ENCODE measurements at regions of chr18 and their contacts with region 1.

Region 1: DNA sequence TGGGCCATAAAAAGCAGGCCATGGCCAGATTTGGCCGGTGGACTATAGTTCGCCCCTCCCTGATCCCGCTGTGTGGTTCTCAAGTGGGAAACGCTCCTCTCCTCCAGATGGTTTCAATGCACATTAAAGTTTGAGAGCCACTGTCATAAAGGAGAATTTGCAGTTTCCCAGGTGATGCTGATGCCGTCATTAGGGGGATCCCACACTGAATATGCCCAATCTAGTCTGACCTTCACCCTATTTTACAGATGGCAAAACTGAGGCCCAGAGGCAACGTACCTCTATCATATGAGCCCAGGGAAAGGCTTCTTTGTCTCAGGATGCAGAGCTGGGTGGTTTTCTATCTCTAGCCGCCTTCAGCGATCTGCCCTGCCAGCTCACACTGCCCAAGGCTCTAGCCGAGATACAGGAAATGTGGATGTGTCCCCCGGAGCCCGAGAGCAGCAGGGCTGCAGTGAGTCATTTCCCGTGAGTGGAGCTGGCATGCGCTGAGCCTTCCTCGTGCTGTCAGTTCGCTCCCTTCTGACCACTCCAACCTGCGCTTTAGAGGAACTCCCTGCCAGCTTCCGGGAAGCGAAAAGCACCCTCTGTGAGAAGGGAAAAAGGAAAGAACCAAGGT is 116.2 kb downstream of the SMAD7 start:
- DNase-seq: peak; percentile 37 to 84 (median 56)
- ATAC-seq: peak; percentile 78 to 83 (median 82)
- H3K4me3 ChIP-seq: peak overlapping the region; percentile 40 to 55
- H3K4me3 Mint-ChIP-seq: peak overlapping the region; percentile 72 to 83 (median 79)
- H3K27ac ChIP-seq: peak overlapping the region; percentile 93
- H3K27ac Mint-ChIP-seq: peak overlapping the region; percentile 88 to 97
- H3K4me1 ChIP-seq: peaks cover 39 to 99% of the 10 kb centered on the region in 2 experiments
- H3K4me1 Mint-ChIP-seq: peaks cover 80 to 99% (median 84%) of the 10 kb centered on the region in 3 donors
- H3K27me3 ChIP-seq: no peaks in the 10 kb centered on the region
- H3K27me3 Mint-ChIP-seq: no peaks in the 10 kb centered on the region

Region 2: DNA sequence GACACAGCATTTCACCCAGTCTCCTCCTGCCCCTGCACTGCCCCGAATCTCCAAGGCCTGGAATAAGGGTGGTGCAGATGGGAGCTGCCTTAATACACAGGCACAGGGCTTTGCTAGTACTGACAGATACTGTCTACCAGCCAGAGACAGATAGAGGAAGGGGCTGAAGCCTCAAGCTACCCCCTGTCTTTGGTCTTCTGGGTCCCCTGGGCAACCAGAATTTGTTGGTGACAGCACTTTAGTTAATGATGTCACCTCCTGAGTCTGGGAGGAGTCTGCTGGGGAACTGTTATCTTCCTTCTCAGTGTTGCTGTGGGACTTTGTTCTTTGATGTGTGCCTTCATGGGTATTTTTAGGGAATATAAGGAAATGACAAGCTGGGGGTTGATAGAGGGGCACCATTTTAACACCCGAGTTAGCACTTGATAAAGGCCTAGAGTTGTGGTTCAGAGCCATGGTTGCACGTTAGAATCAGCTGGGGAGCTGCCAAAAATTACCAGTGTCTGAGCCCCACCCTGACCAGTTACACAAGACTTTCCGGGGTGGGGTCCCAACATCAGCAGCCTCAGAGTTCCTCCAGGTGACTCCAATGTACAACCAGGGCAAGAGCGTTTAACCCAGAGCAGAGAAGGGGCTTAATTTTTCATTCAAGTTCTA is 20.6 kb before region 1 on chr18:
- CTCF ChIA-PET with region 1: interaction called, 3 to 4 read pairs
- POLR2A ChIA-PET with region 1: interaction called in 1 of 2 experiments, 16 read pairs
- DNase-seq: peak in 34 of 35 experiments; percentile 20 to 86 (median 56)
- ATAC-seq: peak; percentile 76 to 83 (median 80)
- H3K4me3 ChIP-seq: no peak overlapping the region
- H3K4me3 Mint-ChIP-seq: peak overlapping the region; percentile 1 to 35 (median 32)
- H3K27ac ChIP-seq: peak overlapping the region; percentile 98
- H3K27ac Mint-ChIP-seq: peak overlapping the region; percentile 89 to 93
- H3K4me1 ChIP-seq: peaks cover 2 to 53% of the 10 kb centered on the region in 2 experiments
- H3K4me1 Mint-ChIP-seq: peaks cover 28 to 55% (median 34%) of the 10 kb centered on the region in 3 donors
- H3K27me3 ChIP-seq: no peaks in the 10 kb centered on the region
- H3K27me3 Mint-ChIP-seq: no peaks in the 10 kb centered on the region